BJ (cell line): ENCODE measurements at regions of chr15 and their contacts with region 1.

Region 1: GRCh38 chr15:100349696-100350433 is 8.1 kb upstream of the ADAMTS17 start:
- DNase-seq: peak; percentile 19
- H3K4me3 ChIP-seq: peak overlapping the region; percentile 65
- H3K27me3 ChIP-seq: no peaks in the 10 kb centered on the region
- CTCF ChIP-seq: peak; percentile 95

Region 2: DNA sequence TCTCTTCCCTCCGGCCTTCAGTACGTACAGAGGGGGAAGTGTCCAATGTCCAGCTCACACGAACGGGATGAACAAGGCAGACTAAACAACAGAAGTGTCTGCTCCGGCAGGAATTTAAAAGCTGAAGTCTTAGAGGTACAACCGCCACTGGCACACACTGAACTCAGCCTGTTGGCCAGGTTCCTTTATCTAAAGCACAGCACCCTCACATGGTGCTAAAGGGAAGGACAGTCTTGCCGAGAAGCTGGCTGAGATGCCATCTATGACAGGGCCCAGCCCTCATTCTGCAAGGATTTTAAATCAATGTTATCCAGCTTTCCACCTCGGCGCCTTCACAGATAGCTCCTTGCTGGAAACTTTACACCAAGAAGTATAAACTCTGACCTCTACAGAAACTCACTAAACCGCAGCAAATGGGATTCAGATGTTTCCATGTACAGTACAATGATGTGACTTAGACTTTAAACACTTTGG is 10.9 kb before region 1 on chr15:
- CTCF ChIA-PET with region 1: interaction called, 25 read pairs
- POLR2A ChIA-PET with region 1: no interaction called
- DNase-seq: no peak
- H3K4me3 ChIP-seq: no peak overlapping the region
- H3K27me3 ChIP-seq: peaks cover 2% of the 10 kb centered on the region; the same call in 1 of the 2 replicates
- CTCF ChIP-seq: peak; percentile 22; the same call in 1 of the 2 replicates